MCF 10A (cell line): ENCODE measurements at regions of chr4 and their contacts with region 1.

Region 1: DNA sequence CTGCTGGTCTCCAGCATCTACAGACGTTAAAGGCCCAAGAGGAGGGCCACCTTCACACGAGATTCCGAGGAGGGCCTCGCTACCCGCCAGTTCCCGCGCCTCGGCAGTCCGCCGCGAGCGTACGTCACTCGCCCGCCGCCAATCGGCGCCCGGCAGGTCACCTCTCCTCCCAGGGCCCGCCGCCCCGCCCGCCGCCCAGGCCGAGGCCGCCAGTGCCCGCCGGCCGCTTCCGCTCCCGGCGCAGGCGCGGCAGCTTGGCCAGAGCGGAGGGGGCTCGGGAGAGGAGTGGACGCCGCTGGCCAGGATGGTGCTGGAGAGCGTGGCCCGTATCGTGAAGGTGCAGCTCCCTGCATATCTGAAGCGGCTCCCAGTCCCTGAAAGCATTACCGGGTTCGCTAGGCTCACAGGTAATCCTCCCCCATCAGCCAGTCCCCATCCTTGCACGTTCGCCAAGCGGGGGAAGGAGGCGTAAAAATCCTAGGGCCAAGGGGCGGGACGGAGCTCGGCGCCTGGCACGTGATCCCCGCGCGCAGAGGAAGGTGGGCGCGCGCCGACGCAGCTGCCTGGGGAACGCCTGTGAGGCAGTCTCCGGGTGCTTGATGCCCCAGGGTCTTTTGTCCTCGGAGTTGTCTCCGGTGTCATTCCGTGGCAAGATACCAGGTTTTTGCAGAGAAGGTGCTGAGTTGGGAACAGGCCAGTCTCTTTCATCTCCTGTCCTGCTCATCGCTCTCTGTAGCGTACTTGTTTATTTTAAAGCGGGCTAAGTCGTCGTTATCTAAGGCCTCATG is at the start of gene CISD2:
- DNase-seq: peak; percentile 95
- H3K4me3 Mint-ChIP-seq: peak within 1 kb of the TSS; percentile 98
- H3K27ac Mint-ChIP-seq: peak within 1 kb of the TSS; percentile 98
- H3K4me1 Mint-ChIP-seq: peaks cover 21% of the 10 kb centered on the region
- H3K27me3 Mint-ChIP-seq: no peaks in the 10 kb centered on the region
- CTCF ChIP-seq: no peak
- total RNA-seq, gene CISD2: 35.5 and 35.8 TPM in 2 replicates

Region 2: GRCh38 chr4:102809190-102809589 is 59.8 kb before region 1 on chr4:
- CTCF ChIA-PET with region 1: no interaction called
- POLR2A ChIA-PET with region 1: interaction called, 11 read pairs
- intact Hi-C with region 1: no loop called
- DNase-seq: no peak
- H3K4me3 Mint-ChIP-seq: no peak overlapping the region
- H3K27ac Mint-ChIP-seq: peak overlapping the region; percentile 88
- H3K4me1 Mint-ChIP-seq: peaks cover 46% of the 10 kb centered on the region
- H3K27me3 Mint-ChIP-seq: no peaks in the 10 kb centered on the region
- CTCF ChIP-seq: no peak

Region 3: GRCh38 chr4:102850370-102850769 is 18.6 kb before region 1 on chr4:
- CTCF ChIA-PET with region 1: no interaction called
- POLR2A ChIA-PET with region 1: interaction called, 22 read pairs
- intact Hi-C with region 1: no loop called
- DNase-seq: no peak
- H3K4me3 Mint-ChIP-seq: no peak overlapping the region
- H3K27ac Mint-ChIP-seq: no peak overlapping the region
- H3K4me1 Mint-ChIP-seq: no peaks in the 10 kb centered on the region
- H3K27me3 Mint-ChIP-seq: no peaks in the 10 kb centered on the region
- CTCF ChIP-seq: no peak

Region 4: GRCh38 chr4:102881343-102881742 is 12.4 kb after region 1 on chr4:
- CTCF ChIA-PET with region 1: interaction called, 4 read pairs
- POLR2A ChIA-PET with region 1: interaction called, 10 read pairs
- intact Hi-C with region 1: no loop called
- DNase-seq: no peak
- H3K4me3 Mint-ChIP-seq: no peak overlapping the region
- H3K27ac Mint-ChIP-seq: no peak overlapping the region
- H3K4me1 Mint-ChIP-seq: peaks cover 8% of the 10 kb centered on the region
- H3K27me3 Mint-ChIP-seq: no peaks in the 10 kb centered on the region
- CTCF ChIP-seq: no peak

Region 5: DNA sequence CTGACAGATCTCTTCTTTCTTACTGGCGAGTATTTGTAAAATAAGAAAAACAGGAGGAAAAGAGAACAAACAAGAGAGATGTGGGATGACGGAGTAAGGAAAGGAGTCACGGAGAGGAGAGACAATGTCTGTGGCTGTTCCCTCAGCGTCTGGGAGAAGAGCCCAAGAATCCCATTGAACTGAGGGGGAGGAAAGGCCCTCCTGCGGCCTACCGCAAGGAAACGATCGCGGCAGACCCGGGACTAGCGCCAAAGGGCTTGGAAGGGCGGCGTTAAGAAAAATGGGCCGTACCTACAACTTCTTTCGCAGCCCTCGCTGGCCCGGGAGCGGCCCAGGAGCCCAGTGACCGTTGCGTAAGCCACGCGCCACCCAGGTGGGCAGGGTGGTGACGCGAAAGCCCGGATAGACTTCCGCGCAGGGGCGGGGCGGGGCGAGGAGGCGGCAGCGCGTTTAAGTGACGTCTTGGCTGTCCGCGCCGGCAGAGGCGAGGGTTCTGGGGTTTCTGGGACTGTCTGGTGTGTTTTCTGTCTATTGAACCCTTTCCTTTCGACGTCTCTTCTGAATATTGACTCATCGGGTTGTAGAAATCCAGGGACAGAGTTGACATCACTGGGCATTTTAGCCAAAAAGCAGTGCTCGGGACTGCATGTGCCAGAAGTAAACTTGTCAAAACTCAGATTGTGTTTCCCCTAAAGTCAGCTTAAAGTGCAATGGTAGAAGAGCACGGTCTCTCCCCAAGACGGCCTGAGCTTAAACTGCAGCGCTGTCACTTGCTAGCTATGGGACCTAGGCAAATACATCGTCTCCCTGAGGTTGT is 150.5 kb after region 1 on chr4 and contains the start of gene SLC9B1:
- CTCF ChIA-PET with region 1: no interaction called
- POLR2A ChIA-PET with region 1: interaction called, 11 read pairs
- intact Hi-C with region 1: no loop called
- DNase-seq: peak; percentile 98
- H3K4me3 Mint-ChIP-seq: peak within 1 kb of the TSS; percentile 72
- H3K27ac Mint-ChIP-seq: peak within 1 kb of the TSS; percentile 97
- H3K4me1 Mint-ChIP-seq: no peaks in the 10 kb centered on the region
- H3K27me3 Mint-ChIP-seq: no peaks in the 10 kb centered on the region
- CTCF ChIP-seq: no peak
- total RNA-seq, gene SLC9B1: 0.77 and 0.86 TPM in 2 replicates